Activated B cell treated with CpG ODN at 0.5 μM for 24 hours (primary cell): ENCODE measurements at regions of chr1 and their contacts with region 1.

Region 1: DNA sequence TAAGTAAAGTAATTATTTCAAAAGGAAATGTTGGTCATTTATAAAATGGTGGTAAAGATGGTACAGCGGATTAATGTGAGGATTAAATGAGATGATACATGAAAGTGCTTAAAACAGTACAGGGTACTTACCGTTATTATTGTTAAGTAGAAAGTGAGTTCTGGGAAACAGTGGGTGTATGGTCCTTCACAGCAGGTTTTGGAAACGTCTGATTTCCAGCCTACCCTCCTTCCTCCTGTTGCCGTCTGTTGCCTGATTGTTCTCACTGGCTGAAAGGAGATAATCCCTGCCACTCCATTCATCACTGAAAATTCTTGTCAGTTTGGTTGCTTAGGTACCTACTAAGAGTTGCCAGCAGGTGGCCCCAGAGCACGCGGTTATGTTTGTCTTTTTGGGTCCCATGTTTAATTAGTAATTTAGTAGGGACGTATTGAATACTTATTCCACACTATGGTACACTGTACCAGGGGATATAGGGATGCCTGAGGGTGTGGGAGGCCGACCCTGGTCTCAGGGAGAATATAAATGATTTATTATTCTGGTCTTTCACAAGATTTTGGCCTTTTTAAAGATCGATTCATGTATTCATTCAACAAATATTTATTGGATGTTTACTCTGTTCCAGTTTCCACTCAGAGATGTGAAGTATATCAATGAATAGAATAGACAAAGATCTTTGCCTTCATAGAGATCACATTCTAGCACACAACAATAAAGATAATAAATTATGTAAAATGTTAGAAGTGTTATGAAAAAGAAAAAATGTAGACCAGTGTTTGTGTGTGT is 30.8 kb upstream of the RPTN start:
- DNase-seq: peak; percentile 34
- ATAC-seq: peak; percentile 73
- H3K4me3 Mint-ChIP-seq: peak overlapping the region; percentile 82
- H3K27ac Mint-ChIP-seq: peak overlapping the region; percentile 43
- H3K4me1 Mint-ChIP-seq: peaks cover 5% of the 10 kb centered on the region
- H3K27me3 Mint-ChIP-seq: peaks cover 10% of the 10 kb centered on the region
- CTCF ChIP-seq: peak; percentile 51

Region 2: DNA sequence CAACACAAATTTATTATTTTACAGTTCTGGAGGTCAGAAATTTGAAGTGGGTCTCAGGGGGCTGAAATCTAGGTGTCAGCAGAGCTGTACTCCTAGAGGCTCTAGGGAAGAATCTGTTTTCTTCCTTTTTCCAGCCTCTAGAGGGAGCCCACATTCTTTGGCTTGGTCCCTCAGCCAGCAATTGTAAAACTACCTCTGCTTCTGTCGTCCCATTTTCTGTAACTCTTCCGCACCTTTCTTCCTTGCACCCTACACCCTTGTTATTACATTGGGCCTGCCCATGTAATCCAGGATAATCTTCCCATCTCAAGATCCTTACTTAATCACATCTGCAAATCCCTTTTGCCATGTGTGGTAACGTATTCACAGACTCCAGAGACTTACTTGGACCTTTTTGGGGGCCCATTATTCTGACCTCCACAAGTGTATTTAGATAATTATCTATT is 255.8 kb before region 1 on chr1:
- CTCF ChIA-PET with region 1: no interaction called
- POLR2A ChIA-PET with region 1: no interaction called
- intact Hi-C with region 1: loop called (anchors 1 kb)
- DNase-seq: no peak
- ATAC-seq: peak; percentile 90
- H3K4me3 Mint-ChIP-seq: no peak overlapping the region
- H3K27ac Mint-ChIP-seq: no peak overlapping the region
- H3K4me1 Mint-ChIP-seq: peaks cover 2% of the 10 kb centered on the region
- H3K27me3 Mint-ChIP-seq: peaks cover 11% of the 10 kb centered on the region
- CTCF ChIP-seq: peak; percentile 86

Region 3: GRCh38 chr1:152047730-152048402 is 142.0 kb before region 1 on chr1:
- CTCF ChIA-PET with region 1: interaction called, 66 read pairs
- POLR2A ChIA-PET with region 1: interaction called, 4 read pairs
- intact Hi-C with region 1: loop called (anchors 1 kb)
- DNase-seq: peak; percentile 72
- ATAC-seq: peak; percentile 94
- H3K4me3 Mint-ChIP-seq: peak overlapping the region; percentile 73
- H3K27ac Mint-ChIP-seq: peak overlapping the region; percentile 98
- H3K4me1 Mint-ChIP-seq: peaks cover 17% of the 10 kb centered on the region
- H3K27me3 Mint-ChIP-seq: peaks cover 2% of the 10 kb centered on the region
- CTCF ChIP-seq: no peak

Region 4: GRCh38 chr1:152107031-152107983 is 82.5 kb before region 1 on chr1:
- CTCF ChIA-PET with region 1: no interaction called
- POLR2A ChIA-PET with region 1: no interaction called
- intact Hi-C with region 1: no loop called
- DNase-seq: no peak
- ATAC-seq: no peak
- H3K4me3 Mint-ChIP-seq: no peak overlapping the region
- H3K27ac Mint-ChIP-seq: no peak overlapping the region
- H3K4me1 Mint-ChIP-seq: no peaks in the 10 kb centered on the region
- H3K27me3 Mint-ChIP-seq: peaks cover 10% of the 10 kb centered on the region
- CTCF ChIP-seq: no peak

Region 5: DNA sequence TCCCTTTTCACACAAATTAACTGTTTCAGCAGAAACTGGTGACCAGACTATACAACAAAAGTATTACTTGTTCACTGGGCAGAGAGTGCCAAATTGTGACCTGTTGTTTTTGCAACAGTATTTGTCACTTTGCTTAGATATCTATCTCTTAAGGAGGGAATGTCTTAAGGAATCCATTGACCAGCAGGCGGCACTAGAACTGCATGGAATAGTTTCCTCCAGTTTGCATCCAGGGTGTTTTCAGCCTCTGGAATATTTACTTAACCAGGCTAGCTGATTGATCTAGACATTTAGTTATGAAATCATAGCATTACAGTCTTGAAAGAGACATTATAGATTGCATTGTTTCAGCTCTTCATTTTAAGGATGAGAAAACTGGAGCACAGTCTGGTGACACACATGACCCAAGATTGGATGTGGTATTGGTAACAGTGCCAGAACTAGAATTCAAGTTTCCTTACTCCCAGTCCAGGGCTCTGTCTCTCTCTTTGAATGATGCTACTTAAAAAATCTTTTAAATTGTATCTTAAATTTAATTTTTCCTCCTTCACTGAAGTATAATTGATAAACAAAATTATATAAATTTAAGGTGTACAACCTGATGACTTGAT is 47.8 kb before region 1 on chr1:
- CTCF ChIA-PET with region 1: no interaction called
- POLR2A ChIA-PET with region 1: no interaction called
- intact Hi-C with region 1: loop called (anchors 1 kb)
- DNase-seq: no peak
- ATAC-seq: no peak
- H3K4me3 Mint-ChIP-seq: no peak overlapping the region
- H3K27ac Mint-ChIP-seq: no peak overlapping the region
- H3K4me1 Mint-ChIP-seq: no peaks in the 10 kb centered on the region
- H3K27me3 Mint-ChIP-seq: peaks cover 31% of the 10 kb centered on the region
- CTCF ChIP-seq: no peak

Region 6: DNA sequence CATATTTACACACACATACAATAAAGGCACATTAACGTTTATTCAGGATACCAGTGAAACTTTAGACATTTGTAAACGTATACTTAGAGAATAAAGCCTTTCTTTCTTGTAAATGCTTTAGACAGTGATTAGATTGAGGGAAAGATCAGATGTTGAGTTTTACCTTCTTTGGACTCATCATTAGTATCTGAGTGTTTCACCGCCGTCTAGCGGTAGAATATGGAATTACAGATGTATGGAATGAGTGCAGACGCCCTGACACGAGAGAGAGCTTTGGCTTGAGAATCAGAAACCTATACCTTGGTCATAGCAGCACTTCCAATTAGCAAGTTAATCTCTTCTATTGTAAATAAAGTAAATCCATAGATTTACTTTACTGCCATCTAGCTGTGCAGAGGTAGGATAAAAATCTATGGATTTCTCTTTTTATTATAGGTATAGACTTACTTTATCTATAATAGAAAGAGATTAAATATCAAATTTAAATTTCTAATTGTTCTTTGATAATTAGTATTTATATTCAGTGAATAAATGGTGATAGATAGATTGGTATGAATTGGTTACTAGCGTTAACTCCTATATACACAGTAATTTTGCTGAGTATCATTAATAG is 157.4 kb after region 1 on chr1:
- CTCF ChIA-PET with region 1: interaction called, 3 read pairs
- POLR2A ChIA-PET with region 1: no interaction called
- intact Hi-C with region 1: loop called (anchors 2 kb)
- DNase-seq: no peak
- ATAC-seq: peak; percentile 47
- H3K4me3 Mint-ChIP-seq: no peak overlapping the region
- H3K27ac Mint-ChIP-seq: no peak overlapping the region
- H3K4me1 Mint-ChIP-seq: no peaks in the 10 kb centered on the region
- H3K27me3 Mint-ChIP-seq: no peaks in the 10 kb centered on the region
- CTCF ChIP-seq: peak; percentile 93

Region 7: GRCh38 chr1:152440635-152441471 is 251.0 kb after region 1 on chr1:
- CTCF ChIA-PET with region 1: interaction called, 7 read pairs
- POLR2A ChIA-PET with region 1: no interaction called
- intact Hi-C with region 1: loop called (anchors 1 kb)
- DNase-seq: peak; percentile 37
- ATAC-seq: peak; percentile 99
- H3K4me3 Mint-ChIP-seq: no peak overlapping the region
- H3K27ac Mint-ChIP-seq: no peak overlapping the region
- H3K4me1 Mint-ChIP-seq: no peaks in the 10 kb centered on the region
- H3K27me3 Mint-ChIP-seq: peaks cover 26% of the 10 kb centered on the region
- CTCF ChIP-seq: no peak